ENCODE measurements at regions of chr4 and their contacts with region 1.

Region 1: GRCh38 chr4:20248155-20248558 is 3.5 kb upstream of the SLIT2 start:
- DNase-seq: no peak
- ATAC-seq: no peak
- H3K4me3 Mint-ChIP-seq: no peak overlapping the region
- H3K27ac Mint-ChIP-seq: no peak overlapping the region
- H3K4me1 Mint-ChIP-seq: peaks cover 12% of the 10 kb centered on the region
- H3K27me3 Mint-ChIP-seq: peaks cover 21% of the 10 kb centered on the region
- CTCF ChIP-seq: no peak

Region 2: DNA sequence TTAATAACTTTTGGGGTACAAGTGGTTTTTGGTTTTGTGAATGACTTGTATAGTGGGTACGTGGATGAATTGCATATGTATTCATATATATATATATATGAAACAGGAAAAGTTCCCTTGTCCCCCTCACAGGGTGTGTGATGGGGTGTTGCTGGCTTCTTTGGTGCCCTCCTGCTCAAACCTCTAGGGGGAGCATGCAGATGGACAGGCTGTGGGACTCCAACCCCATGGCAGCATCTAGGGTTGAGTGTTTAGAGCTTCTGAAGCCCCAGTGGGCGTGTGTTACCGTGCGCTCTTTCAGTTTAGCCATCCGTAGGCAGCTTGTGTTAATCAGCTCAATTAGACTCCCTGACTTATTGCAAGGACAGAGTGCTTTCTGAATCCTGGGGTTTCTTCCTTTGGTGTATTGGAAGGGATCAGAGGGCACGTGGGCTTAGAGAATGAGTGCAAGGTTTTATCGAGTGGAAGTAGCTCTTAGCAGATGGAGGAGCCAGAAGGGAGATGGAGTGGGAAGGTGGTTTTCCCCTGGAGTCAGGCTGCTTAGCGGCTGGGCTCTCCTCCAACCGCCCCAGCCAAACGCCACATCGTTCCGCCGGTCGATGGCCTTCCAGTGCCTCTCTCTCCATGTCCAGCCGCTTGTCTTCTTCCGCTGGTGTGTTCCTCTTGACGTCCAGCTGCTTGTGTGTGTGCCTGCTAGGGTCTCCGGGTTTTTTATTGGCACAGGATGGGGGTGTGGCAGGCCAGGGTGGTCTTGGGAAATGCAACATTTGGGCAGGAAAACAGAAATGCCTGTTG is 1552.2 kb before region 1 on chr4:
- CTCF ChIA-PET with region 1: no interaction called
- POLR2A ChIA-PET with region 1: no interaction called
- intact Hi-C with region 1: no loop called
- DNase-seq: no peak
- ATAC-seq: no peak
- H3K4me3 Mint-ChIP-seq: no peak overlapping the region
- H3K27ac Mint-ChIP-seq: no peak overlapping the region
- H3K4me1 Mint-ChIP-seq: no peaks in the 10 kb centered on the region
- H3K27me3 Mint-ChIP-seq: no peaks in the 10 kb centered on the region
- CTCF ChIP-seq: no peak

Region 3: GRCh38 chr4:19224820-19225219 is 1023.3 kb before region 1 on chr4:
- CTCF ChIA-PET with region 1: interaction called, 4 read pairs
- POLR2A ChIA-PET with region 1: no interaction called
- intact Hi-C with region 1: loop called (anchors 2 kb)
- DNase-seq: no peak
- ATAC-seq: no peak
- H3K4me3 Mint-ChIP-seq: no peak overlapping the region
- H3K27ac Mint-ChIP-seq: no peak overlapping the region
- H3K4me1 Mint-ChIP-seq: no peaks in the 10 kb centered on the region
- H3K27me3 Mint-ChIP-seq: no peaks in the 10 kb centered on the region
- CTCF ChIP-seq: no peak

Measured in activated B cell treated with CpG ODN at 0.5 μM for 24 hours (primary cell).